ENCODE measurements at regions of chr6 and their contacts with region 1.

Region 1: GRCh38 chr6:37018198-37019064 is 13.0 kb downstream of the FGD2 start:
- DNase-seq: peak; percentile 77 to 93
- H3K4me3 ChIP-seq: no peak overlapping the region
- H3K27ac ChIP-seq: no peak overlapping the region
- H3K4me1 ChIP-seq: peaks cover 0 to 5% (median 3%) of the 10 kb centered on the region in 4 experiments; a peak in 5 of 7 replicates
- H3K27me3 ChIP-seq: no peaks in the 10 kb centered on the region
- CTCF ChIP-seq: peak; percentile 97 to 100 (median 97)
- EP300 ChIP-seq: no peak
- POLR2A ChIP-seq: no peak
- RAD21 ChIP-seq: peak; percentile 97

Region 2: DNA sequence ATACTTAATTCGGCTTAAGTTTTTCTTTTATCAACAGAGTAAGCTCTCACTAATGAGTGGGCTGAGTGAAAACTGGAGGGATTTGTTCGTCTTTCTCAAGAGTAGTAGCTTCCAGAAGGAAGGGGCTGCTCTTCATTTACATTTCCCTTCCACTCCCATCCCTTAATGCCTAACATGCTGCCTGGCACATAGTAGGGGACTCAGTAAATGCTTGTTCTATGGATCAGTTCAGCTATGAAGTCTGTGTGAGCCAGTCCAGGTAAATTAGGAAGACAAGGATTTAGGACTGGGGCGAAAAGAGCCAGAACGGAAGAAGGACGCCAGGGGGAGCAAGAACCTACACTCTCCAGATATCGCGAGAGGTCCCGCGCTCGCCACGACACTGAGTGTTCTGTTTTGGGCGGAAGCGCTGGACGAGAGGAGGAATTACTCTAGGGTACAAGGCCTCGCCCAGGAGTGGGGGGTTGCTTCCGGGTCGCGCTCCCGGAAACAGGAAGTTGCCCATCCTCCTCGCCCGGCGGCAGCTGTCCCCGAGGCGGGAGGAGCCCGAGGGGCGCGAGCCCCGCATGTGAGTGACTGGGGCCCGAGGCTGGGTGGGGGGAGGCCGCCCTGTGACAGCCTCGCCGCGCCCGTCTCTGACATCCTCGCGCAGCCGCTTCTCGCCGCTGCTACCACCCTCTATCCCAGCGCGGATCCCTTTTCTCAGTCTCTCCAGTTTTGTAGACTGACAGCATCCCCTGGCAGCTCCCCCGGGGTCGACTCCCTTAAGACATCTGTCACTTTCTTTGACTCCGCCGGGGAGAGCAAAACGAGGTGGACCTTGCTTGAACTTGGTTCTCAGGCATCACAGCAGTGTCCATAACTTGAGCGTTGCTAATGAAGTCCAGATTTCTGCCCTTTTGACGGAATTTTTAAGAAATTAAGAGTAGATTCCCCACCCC is 132.7 kb before region 1 on chr6 and contains the start of gene C6orf89:
- CTCF ChIA-PET with region 1: interaction called, 41 read pairs
- POLR2A ChIA-PET with region 1: no interaction called
- DNase-seq: peak; percentile 95 to 97
- H3K4me3 ChIP-seq: peak within 1 kb of the TSS; percentile 47 to 81 (median 70)
- H3K27ac ChIP-seq: peak within 1 kb of the TSS; percentile 24; the same call in 1 of the 2 replicates
- H3K4me1 ChIP-seq: no peaks in the 10 kb centered on the region; a peak in 1 of 7 replicates
- H3K27me3 ChIP-seq: no peaks in the 10 kb centered on the region
- CTCF ChIP-seq: peak; percentile 72 to 87 (median 82)
- EP300 ChIP-seq: 0 out of 3 replicates have a peak, but pooled peaks of 1 of the 2 experiments have one; percentile 10
- POLR2A ChIP-seq: no peak
- RAD21 ChIP-seq: peak; percentile 32 to 47; a peak in 3 of 4 replicates
- total RNA-seq, gene C6orf89: 11.6 and 12.3 TPM in 2 replicates

Region 3: GRCh38 chr6:36955671-36956445 is 62.6 kb before region 1 on chr6:
- CTCF ChIA-PET with region 1: interaction called, 41 read pairs
- POLR2A ChIA-PET with region 1: no interaction called
- DNase-seq: no peak
- H3K4me3 ChIP-seq: no peak overlapping the region
- H3K27ac ChIP-seq: no peak overlapping the region
- H3K4me1 ChIP-seq: no peaks in the 10 kb centered on the region; a peak in 1 of 7 replicates
- H3K27me3 ChIP-seq: no peaks in the 10 kb centered on the region
- CTCF ChIP-seq: no peak
- EP300 ChIP-seq: no peak
- POLR2A ChIP-seq: no peak
- RAD21 ChIP-seq: no peak

Region 4: DNA sequence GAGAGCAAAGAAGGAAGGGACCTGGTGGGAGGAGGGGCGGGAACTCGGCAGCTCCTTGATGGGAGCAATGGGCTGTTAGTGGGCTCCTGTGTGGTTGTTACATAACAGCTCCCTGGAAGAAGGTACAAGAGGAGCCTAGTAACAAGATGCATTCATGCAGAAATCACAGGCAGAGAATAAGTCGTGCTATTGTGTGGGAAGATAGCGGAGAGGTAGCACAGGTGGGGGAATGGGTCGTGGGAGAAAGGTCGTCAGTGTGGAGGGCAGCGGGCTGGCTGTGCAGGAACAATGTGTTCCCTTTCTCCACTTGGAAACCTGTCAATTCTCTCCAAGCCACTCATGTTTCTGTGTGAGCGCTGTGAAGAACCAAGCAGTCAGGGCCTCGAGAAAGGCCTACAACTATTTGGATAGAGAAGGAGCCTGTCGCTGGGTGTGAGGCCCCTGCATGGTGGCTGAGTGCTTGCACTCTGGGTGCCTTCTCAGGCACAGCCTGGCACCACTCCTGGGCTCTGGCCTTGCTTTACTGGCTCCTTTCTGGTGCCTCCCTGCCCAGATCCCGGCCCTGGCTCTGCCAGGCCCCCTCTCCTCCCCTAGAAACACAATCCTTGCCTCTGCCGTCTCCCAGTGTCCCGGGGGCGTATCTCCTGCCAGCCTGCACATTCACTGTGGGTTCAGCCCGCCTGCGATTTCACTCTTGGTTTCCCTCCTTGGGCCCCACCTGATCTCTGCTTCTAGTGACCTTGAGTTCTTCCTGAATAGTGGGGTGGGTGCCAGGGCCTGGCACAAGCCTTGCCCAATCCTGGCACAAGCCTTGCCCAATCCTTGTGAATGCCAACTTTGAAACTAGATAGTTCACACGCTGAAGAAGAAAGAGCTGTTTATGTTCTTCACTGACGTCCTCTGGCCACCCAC is 20.4 kb before region 1 on chr6:
- CTCF ChIA-PET with region 1: interaction called, 33 read pairs
- POLR2A ChIA-PET with region 1: interaction called, 5 read pairs
- DNase-seq: no peak
- H3K4me3 ChIP-seq: no peak overlapping the region
- H3K27ac ChIP-seq: no peak overlapping the region
- H3K4me1 ChIP-seq: peaks cover 0 to 4% (median 2%) of the 10 kb centered on the region in 4 experiments; a peak in 4 of 7 replicates
- H3K27me3 ChIP-seq: no peaks in the 10 kb centered on the region
- CTCF ChIP-seq: no peak
- EP300 ChIP-seq: no peak
- POLR2A ChIP-seq: no peak
- RAD21 ChIP-seq: no peak

Region 5: DNA sequence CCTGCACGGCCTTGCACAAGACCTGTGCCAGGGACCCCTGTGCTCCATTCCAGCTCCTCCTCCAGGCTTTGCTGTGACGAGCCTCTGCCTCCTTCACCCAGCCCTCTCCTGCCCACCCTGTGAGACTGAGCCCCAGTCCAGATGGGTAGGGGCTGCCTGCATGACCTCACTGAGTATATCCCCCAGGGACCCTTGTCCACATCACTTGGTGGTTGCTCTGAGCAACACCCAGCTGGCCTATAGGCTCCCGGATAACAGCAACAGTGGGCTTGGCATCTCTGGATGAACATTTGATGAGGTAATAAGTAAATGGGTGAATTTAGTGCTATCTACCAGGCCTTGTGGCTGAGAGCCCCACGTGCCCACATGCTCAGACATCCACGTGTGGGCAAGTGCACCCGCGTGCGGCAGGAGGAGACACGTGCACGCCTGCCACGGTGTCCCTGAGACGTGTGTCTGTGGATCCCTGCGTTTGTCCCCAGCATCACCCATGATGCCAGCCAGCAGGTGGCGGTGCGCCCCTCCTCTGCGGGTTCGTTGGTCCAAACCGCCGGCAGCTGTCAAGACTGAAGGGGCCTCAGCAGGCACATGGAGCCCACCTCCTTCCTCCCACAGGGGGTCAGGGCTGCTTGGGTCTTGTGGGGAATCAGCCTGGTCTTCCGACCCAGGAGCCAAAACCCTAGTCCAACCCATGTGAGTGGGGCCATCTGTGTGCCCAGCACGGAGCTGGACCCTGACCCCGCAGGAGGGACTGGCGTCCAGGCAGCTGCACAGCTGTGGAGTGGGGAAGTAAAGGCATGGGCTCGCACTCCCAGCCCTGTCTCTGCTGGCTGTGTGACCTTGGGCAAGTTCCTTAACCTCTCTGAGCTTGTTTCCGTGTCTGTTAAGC is 33.0 kb after region 1 on chr6:
- CTCF ChIA-PET with region 1: interaction called, 635 read pairs
- POLR2A ChIA-PET with region 1: interaction called, 11 read pairs
- DNase-seq: peak; percentile 47 to 98
- H3K4me3 ChIP-seq: no peak overlapping the region
- H3K27ac ChIP-seq: no peak overlapping the region
- H3K4me1 ChIP-seq: peaks cover 0 to 22% (median 17%) of the 10 kb centered on the region in 4 experiments; a peak in 6 of 7 replicates
- H3K27me3 ChIP-seq: no peaks in the 10 kb centered on the region
- CTCF ChIP-seq: peak in 2 of 3 experiments; percentile 97; a peak in 3 of 4 replicates
- EP300 ChIP-seq: 0 out of 3 replicates have a peak, but pooled peaks of 1 of the 2 experiments have one; percentile 24
- POLR2A ChIP-seq: no peak
- RAD21 ChIP-seq: peak; percentile 97 to 98

Region 6: GRCh38 chr6:37373822-37374471 is 355.5 kb after region 1 on chr6:
- CTCF ChIA-PET with region 1: no interaction called
- POLR2A ChIA-PET with region 1: no interaction called
- DNase-seq: no peak
- H3K4me3 ChIP-seq: no peak overlapping the region
- H3K27ac ChIP-seq: no peak overlapping the region
- H3K4me1 ChIP-seq: no peaks in the 10 kb centered on the region
- H3K27me3 ChIP-seq: no peaks in the 10 kb centered on the region
- CTCF ChIP-seq: no peak
- EP300 ChIP-seq: no peak
- POLR2A ChIP-seq: no peak
- RAD21 ChIP-seq: no peak